Heart left ventricle (tissue), 16 donors: ENCODE measurements at regions of chr5 and their contacts with region 1.

Region 1: GRCh38 chr5:32138839-32139493 is 35.2 kb downstream of the GOLPH3 start:
- DNase-seq: no peak
- ATAC-seq: no peak
- H3K4me3 ChIP-seq: no peak overlapping the region
- H3K27ac ChIP-seq: no peak overlapping the region
- H3K4me1 ChIP-seq: peaks cover 0 to 7% (median under 1%) of the 10 kb centered on the region in 12 donors
- H3K27me3 ChIP-seq: no peaks in the 10 kb centered on the region
- CTCF ChIP-seq: no peak
- POLR2A ChIP-seq: no peak

Region 2: DNA sequence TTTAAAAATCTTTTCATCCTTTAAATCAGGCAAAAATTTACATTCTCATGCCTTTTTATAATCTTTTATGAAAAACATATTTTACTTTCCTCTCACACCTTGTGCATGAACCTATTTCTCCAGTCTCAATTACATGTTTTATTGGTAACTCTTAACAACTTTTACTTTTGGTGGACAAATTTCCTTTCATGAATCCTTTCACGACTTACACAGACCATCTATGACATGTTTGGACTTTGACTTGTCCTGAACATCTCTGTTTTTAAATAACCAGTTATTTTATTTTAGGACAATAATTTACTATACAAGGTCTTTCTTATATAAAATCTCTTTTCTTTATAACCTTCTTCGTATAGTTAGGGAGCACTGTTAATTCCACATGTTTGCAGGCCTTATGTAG is 200.2 kb after region 1 on chr5:
- intact Hi-C with region 1: loop called in 1 of 10 experiments (anchors 10 kb)
- DNase-seq: no peak
- ATAC-seq: no peak
- H3K4me3 ChIP-seq: no peak overlapping the region
- H3K27ac ChIP-seq: no peak overlapping the region
- H3K4me1 ChIP-seq: no peaks in the 10 kb centered on the region
- H3K27me3 ChIP-seq: no peaks in the 10 kb centered on the region
- CTCF ChIP-seq: no peak
- POLR2A ChIP-seq: no peak